ENCODE measurements at regions of chr1 and their contacts with region 1.

Region 1: GRCh38 chr1:64891448-64891825 is 74.9 kb downstream of the JAK1 start:
- DNase-seq: no peak
- ATAC-seq: peak; percentile 48 to 71 (median 60)
- H3K4me3 ChIP-seq: peak overlapping the region in 3 of 12 donors; percentile 1 to 30 (median 6)
- H3K27ac ChIP-seq: peak overlapping the region in 11 of 12 donors; percentile 9 to 62 (median 48)
- H3K4me1 ChIP-seq: peaks cover 23 to 95% (median 57%) of the 10 kb centered on the region in 12 donors
- H3K27me3 ChIP-seq: no peaks in the 10 kb centered on the region
- CTCF ChIP-seq: no peak
- POLR2A ChIP-seq: no peak

Region 2: GRCh38 chr1:64811131-64811530 is 80.3 kb before region 1 on chr1:
- intact Hi-C with region 1: no loop called
- DNase-seq: no peak
- ATAC-seq: no peak
- H3K4me3 ChIP-seq: no peak overlapping the region
- H3K27ac ChIP-seq: no peak overlapping the region
- H3K4me1 ChIP-seq: peaks cover 0 to 18% (median 2%) of the 10 kb centered on the region in 12 donors
- H3K27me3 ChIP-seq: no peaks in the 10 kb centered on the region
- CTCF ChIP-seq: no peak
- POLR2A ChIP-seq: no peak

Region 3: DNA sequence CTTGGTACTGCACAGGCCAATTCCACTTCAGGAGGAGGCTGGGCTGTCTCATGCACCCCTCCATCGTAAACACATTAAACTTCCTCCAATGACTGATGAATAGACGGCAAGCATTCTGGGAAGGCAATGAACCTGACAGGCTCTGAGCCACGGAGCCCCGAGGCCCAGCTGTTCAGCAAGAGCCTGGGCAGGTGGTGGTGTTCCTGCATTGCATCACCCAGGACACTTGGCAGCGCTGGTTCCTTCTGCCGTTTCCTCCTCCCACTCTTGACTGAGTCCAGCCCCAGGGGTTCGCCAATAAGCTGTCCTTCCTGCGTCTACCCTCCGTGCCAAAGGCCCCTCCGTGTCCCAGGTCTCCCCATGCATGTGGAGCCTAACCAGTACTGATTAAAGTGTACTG is 34.9 kb before region 1 on chr1:
- intact Hi-C with region 1: no loop called
- DNase-seq: peak in 1 of 5 donors; percentile 43
- ATAC-seq: peak in 2 of 4 donors; percentile 23 to 30
- H3K4me3 ChIP-seq: no peak overlapping the region
- H3K27ac ChIP-seq: peak overlapping the region in 1 of 12 donors; percentile 27
- H3K4me1 ChIP-seq: peaks cover 0 to 6% (median 0%) of the 10 kb centered on the region in 12 donors
- H3K27me3 ChIP-seq: no peaks in the 10 kb centered on the region
- CTCF ChIP-seq: no peak
- POLR2A ChIP-seq: no peak

Region 4: DNA sequence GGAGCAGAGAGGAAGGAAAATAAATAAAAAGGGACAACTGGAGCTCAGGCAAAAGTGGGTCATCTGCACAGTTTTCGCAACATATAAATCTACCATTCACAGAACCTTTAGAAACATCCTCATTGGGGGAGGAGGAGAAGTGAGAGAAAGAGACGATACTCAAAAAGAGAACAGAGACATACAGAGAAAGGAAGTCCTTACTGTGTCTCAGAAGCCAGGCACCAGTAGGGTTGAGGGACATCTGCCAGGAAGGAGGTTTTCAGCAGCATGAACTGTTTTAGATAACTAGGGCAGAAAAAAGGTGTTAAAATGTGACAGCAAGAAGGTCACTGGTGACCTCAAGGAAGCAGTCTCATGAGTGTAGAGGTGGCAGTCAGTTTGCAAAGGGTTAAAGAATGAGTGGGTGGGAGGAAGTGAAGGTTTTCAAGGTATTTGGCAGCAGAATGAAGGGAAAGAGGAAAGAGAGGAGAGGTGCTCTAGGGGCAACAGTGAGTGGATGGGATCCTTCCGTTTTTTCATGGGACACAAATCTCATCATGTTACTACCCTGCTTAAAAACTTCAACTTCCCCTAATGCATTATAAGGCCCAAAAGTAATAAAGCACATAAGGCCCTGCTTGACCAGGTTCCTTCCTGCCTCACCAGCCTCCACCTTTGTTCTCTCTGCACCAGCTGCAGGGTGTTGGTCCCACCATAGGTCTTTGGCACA is 65.5 kb after region 1 on chr1:
- intact Hi-C with region 1: loop called in 5 of 10 experiments (anchors 5 to 10 kb)
- DNase-seq: no peak
- ATAC-seq: peak in 3 of 4 donors; percentile 14 to 39 (median 17)
- H3K4me3 ChIP-seq: no peak overlapping the region
- H3K27ac ChIP-seq: peak overlapping the region in 5 of 12 donors; percentile 2 to 85 (median 67)
- H3K4me1 ChIP-seq: peaks cover 0 to 99% (median 56%) of the 10 kb centered on the region in 12 donors
- H3K27me3 ChIP-seq: no peaks in the 10 kb centered on the region
- CTCF ChIP-seq: no peak
- POLR2A ChIP-seq: no peak